ENCODE measurements at regions of chr20 and their contacts with region 1.

Region 1: GRCh38 chr20:21235484-21236445 is 67.4 kb upstream of the XRN2 start:
- DNase-seq: peak; percentile 72
- H3K4me3 Mint-ChIP-seq: no peak overlapping the region
- H3K27ac Mint-ChIP-seq: no peak overlapping the region
- H3K4me1 Mint-ChIP-seq: peaks cover 5% of the 10 kb centered on the region
- H3K27me3 Mint-ChIP-seq: no peaks in the 10 kb centered on the region
- CTCF ChIP-seq: peak; percentile 75

Region 2: GRCh38 chr20:20837574-20838021 is 398.2 kb before region 1 on chr20:
- CTCF ChIA-PET with region 1: interaction called, 82 read pairs
- POLR2A ChIA-PET with region 1: no interaction called
- intact Hi-C with region 1: loop called (anchors 1 kb)
- DNase-seq: peak; percentile 50
- H3K4me3 Mint-ChIP-seq: no peak overlapping the region
- H3K27ac Mint-ChIP-seq: no peak overlapping the region
- H3K4me1 Mint-ChIP-seq: no peaks in the 10 kb centered on the region
- H3K27me3 Mint-ChIP-seq: peaks cover 17% of the 10 kb centered on the region
- CTCF ChIP-seq: peak; percentile 79

Region 3: DNA sequence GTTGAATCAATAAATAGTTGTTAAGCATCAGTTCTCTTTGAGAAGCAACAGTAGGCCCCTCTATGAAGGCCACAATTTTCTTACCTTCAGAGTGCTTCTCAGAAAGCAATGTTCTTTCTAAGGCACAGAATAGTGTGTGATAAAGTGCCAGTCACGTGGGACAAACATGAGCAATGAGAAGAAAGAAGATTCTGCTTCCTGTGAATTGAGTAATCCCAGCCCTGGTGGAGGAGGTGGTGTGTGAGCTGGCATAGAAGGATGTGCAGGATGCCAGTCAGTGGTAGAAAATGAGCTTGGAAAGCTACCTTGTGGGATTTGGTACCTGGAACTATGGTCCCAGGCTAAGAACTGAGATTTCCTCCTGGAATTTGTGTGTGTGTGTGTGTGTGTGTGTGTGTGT is 88.2 kb before region 1 on chr20:
- CTCF ChIA-PET with region 1: interaction called, 12 read pairs
- POLR2A ChIA-PET with region 1: no interaction called
- intact Hi-C with region 1: no loop called
- DNase-seq: peak; percentile 58
- H3K4me3 Mint-ChIP-seq: no peak overlapping the region
- H3K27ac Mint-ChIP-seq: peak overlapping the region; percentile 20
- H3K4me1 Mint-ChIP-seq: peaks cover 8% of the 10 kb centered on the region
- H3K27me3 Mint-ChIP-seq: no peaks in the 10 kb centered on the region
- CTCF ChIP-seq: no peak

Region 4: GRCh38 chr20:21262812-21263211 is 27.0 kb after region 1 on chr20:
- CTCF ChIA-PET with region 1: interaction called, 14 read pairs
- POLR2A ChIA-PET with region 1: no interaction called
- intact Hi-C with region 1: no loop called
- DNase-seq: peak; percentile 49
- H3K4me3 Mint-ChIP-seq: no peak overlapping the region
- H3K27ac Mint-ChIP-seq: no peak overlapping the region
- H3K4me1 Mint-ChIP-seq: no peaks in the 10 kb centered on the region
- H3K27me3 Mint-ChIP-seq: no peaks in the 10 kb centered on the region
- CTCF ChIP-seq: no peak

Region 5: GRCh38 chr20:21352703-21353102 is 116.9 kb after region 1 on chr20:
- CTCF ChIA-PET with region 1: interaction called, 22 read pairs
- POLR2A ChIA-PET with region 1: interaction called, 5 read pairs
- intact Hi-C with region 1: no loop called
- DNase-seq: no peak
- H3K4me3 Mint-ChIP-seq: no peak overlapping the region
- H3K27ac Mint-ChIP-seq: no peak overlapping the region
- H3K4me1 Mint-ChIP-seq: no peaks in the 10 kb centered on the region
- H3K27me3 Mint-ChIP-seq: no peaks in the 10 kb centered on the region
- CTCF ChIP-seq: no peak

Region 6: DNA sequence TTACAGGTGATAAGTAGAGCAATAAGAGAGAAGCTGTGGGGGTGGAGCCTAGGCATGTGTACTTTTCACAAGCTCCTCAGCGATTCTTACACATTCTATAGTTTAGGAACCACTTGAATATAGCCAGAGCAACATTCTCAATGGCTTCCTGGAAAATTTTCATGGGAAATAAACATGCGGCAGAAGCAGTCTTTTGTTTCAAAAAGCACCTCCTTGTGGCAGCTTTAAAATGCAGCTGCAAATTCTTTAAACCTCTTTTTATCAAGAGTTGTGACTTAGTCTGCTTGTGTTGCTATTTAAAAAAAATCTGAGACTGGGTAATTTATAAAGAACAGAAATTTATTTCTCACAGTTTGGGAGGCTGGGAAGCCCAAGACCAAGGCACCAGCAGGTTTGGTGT is 254.3 kb after region 1 on chr20:
- CTCF ChIA-PET with region 1: interaction called, 41 read pairs
- POLR2A ChIA-PET with region 1: interaction called, 4 read pairs
- intact Hi-C with region 1: no loop called
- DNase-seq: no peak
- H3K4me3 Mint-ChIP-seq: no peak overlapping the region
- H3K27ac Mint-ChIP-seq: no peak overlapping the region
- H3K4me1 Mint-ChIP-seq: no peaks in the 10 kb centered on the region
- H3K27me3 Mint-ChIP-seq: peaks cover 15% of the 10 kb centered on the region
- CTCF ChIP-seq: peak; percentile 18

Region 7: GRCh38 chr20:21577551-21577950 is 341.8 kb after region 1 on chr20:
- CTCF ChIA-PET with region 1: interaction called, 51 read pairs
- POLR2A ChIA-PET with region 1: no interaction called
- intact Hi-C with region 1: loop called (anchors 1 kb)
- DNase-seq: no peak
- H3K4me3 Mint-ChIP-seq: no peak overlapping the region
- H3K27ac Mint-ChIP-seq: no peak overlapping the region
- H3K4me1 Mint-ChIP-seq: no peaks in the 10 kb centered on the region
- H3K27me3 Mint-ChIP-seq: peaks cover 72% of the 10 kb centered on the region
- CTCF ChIP-seq: no peak